Activated CD4-positive, alpha-beta T cell treated with anti-CD3 and anti-CD28 coated beads for 36 hours (primary cell): ENCODE measurements at regions of chr1 and their contacts with region 1.

Region 1: DNA sequence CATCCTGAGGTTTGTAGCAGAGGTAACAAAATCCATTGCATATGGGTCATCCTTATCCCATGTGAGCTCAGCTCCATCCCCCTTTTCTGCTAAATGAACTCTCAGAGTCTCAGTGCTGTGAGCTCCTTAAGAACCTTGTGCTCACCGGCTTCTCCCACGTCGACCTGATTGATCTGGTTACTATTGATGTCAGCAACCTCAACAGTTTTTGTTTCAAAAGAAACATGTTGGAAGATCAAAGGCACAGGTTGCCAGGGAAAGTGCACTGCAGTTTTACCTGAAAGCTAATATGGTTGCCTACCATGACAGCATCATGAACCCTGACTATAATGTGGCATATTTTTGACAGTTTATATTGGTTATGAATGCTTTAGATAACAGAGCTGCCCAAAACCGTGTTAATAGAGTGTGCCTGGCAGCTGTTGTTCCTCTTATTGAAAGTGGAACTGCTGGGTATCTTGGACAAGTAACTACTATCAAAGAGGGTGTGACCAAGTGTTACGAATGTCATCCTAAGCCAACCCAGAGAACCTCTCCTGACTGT is 131.4 kb downstream of the HS2ST1 start:
- DNase-seq: peak; percentile 80
- ATAC-seq: peak; percentile 81
- H3K4me3 Mint-ChIP-seq: peak overlapping the region; percentile 57
- H3K27ac Mint-ChIP-seq: peak overlapping the region; percentile 94
- H3K4me1 Mint-ChIP-seq: peaks cover 58% of the 10 kb centered on the region
- H3K27me3 Mint-ChIP-seq: no peaks in the 10 kb centered on the region

Region 2: DNA sequence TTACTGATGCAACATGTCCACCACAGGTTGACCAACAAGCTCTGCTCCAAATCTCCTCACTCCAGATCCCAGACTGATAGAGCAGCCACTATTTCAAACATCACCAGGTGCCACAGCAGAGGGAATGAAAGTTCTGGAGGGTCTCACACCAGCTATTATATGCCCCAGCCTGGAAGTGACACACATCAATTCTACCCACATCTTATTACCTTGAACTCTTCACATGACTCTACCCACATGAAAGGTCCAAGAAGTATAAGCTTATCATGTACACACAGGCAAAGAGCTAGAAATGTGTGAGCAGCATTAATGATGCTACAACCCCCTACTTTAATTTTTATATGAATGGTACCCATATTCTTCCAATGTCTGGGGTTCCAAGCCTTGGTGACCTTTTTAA is 277.3 kb before region 1 on chr1:
- CTCF ChIA-PET with region 1: no interaction called
- POLR2A ChIA-PET with region 1: no interaction called
- intact Hi-C with region 1: no loop called
- DNase-seq: no peak
- ATAC-seq: no peak
- H3K4me3 Mint-ChIP-seq: no peak overlapping the region
- H3K27ac Mint-ChIP-seq: no peak overlapping the region
- H3K4me1 Mint-ChIP-seq: peaks cover 6% of the 10 kb centered on the region
- H3K27me3 Mint-ChIP-seq: peaks cover 8% of the 10 kb centered on the region

Region 3: DNA sequence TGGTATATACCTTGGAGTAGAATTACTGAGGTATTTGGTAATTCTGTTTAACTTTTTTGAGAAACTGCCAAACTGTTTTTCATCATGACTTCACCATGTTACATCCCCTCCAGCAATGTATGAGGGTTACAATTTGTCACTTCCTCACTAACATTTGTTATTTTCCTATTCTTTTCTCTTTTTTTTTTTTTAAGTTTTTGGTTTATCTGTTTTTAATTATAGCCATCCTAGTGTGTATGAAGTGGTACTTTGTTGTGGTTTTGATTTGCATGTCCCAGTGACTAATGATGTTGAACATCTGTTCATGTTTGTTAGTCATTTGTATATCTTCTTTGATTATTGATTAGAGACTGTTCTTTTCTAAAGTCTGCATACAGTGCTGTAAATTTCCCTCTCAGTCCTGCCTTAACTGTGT is 15.9 kb after region 1 on chr1:
- CTCF ChIA-PET with region 1: interaction called, 3 read pairs
- POLR2A ChIA-PET with region 1: interaction called, 4 read pairs
- intact Hi-C with region 1: loop called in 1 of 2 experiments (anchors 2 kb)
- DNase-seq: no peak
- ATAC-seq: peak; percentile 85
- H3K4me3 Mint-ChIP-seq: no peak overlapping the region
- H3K27ac Mint-ChIP-seq: no peak overlapping the region
- H3K4me1 Mint-ChIP-seq: peaks cover 47% of the 10 kb centered on the region
- H3K27me3 Mint-ChIP-seq: no peaks in the 10 kb centered on the region

Region 4: GRCh38 chr1:87077959-87078639 is 32.3 kb after region 1 on chr1:
- CTCF ChIA-PET with region 1: interaction called, 17 read pairs
- POLR2A ChIA-PET with region 1: interaction called, 6 read pairs
- intact Hi-C with region 1: loop called (anchors 1 to 2 kb)
- DNase-seq: peak; percentile 15
- ATAC-seq: peak; percentile 97
- H3K4me3 Mint-ChIP-seq: no peak overlapping the region
- H3K27ac Mint-ChIP-seq: peak overlapping the region; percentile 71
- H3K4me1 Mint-ChIP-seq: peaks cover 23% of the 10 kb centered on the region
- H3K27me3 Mint-ChIP-seq: no peaks in the 10 kb centered on the region

Region 5: DNA sequence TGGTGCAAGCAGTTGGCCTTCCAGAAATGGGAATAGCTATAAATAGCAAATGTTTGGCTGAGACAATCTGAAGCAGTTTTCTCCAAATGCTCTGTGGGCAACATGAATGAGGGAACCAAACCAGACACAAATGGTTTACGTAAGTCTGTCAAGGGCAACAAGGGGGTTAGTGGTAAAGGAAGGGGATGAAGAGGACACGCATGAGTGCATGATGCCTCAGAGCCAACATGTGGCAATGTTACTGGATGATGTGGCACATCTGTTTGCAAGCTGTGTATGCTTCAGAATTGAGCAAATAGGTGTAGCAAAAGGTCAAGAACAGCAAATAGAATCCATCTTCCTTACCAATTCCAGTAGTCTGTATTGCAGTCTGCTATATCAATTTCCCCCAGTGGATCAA is 206.6 kb after region 1 on chr1:
- CTCF ChIA-PET with region 1: no interaction called
- POLR2A ChIA-PET with region 1: no interaction called
- intact Hi-C with region 1: no loop called
- DNase-seq: no peak
- ATAC-seq: no peak
- H3K4me3 Mint-ChIP-seq: no peak overlapping the region
- H3K27ac Mint-ChIP-seq: no peak overlapping the region
- H3K4me1 Mint-ChIP-seq: no peaks in the 10 kb centered on the region
- H3K27me3 Mint-ChIP-seq: peaks cover 15% of the 10 kb centered on the region